PC-9 (cell line): ENCODE measurements at regions of chr2 and their contacts with region 1.

Region 1: DNA sequence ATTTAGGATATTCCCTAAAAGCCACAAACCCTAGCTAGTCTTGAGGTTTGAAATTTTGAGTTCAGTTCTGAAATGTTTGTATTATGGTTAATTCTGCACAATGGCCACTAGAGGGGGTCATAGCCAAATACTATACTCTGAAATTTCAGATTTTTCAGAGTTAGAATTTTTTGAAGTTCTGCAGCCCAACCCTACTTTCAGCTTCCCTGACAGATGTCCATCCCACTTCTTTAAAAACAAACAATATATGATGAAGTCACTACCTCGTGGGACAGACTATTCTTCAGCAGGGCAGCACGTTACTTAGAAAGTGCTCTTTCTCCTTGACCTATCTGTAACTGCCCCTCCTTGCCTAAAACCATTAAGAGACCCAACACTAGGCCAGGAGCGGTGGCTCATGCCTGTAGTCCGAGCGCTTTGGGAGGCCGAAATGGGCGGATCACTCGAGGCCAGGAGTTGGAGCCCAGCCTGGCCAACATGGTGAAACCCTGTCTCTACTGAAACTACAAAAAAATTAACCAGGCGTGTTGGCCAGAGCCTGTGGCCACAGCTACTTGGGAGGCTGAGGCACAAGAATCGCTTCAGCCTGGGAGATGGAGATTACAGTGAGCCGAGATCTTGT is 48.2 kb upstream of the PAPOLG start:
- DNase-seq: peak in 1 of 2 experiments; percentile 53
- H3K4me3 ChIP-seq: no peak overlapping the region
- H3K27ac ChIP-seq: no peak overlapping the region
- H3K4me1 ChIP-seq: no peaks in the 10 kb centered on the region
- H3K27me3 ChIP-seq: no peaks in the 10 kb centered on the region
- CTCF ChIP-seq: peak; percentile 94

Region 2: GRCh38 chr2:60516383-60516811 is 191.5 kb before region 1 on chr2:
- CTCF ChIA-PET with region 1: no interaction called
- POLR2A ChIA-PET with region 1: no interaction called
- intact Hi-C with region 1: no loop called
- DNase-seq: no peak
- H3K4me3 ChIP-seq: no peak overlapping the region
- H3K27ac ChIP-seq: no peak overlapping the region
- H3K4me1 ChIP-seq: no peaks in the 10 kb centered on the region
- H3K27me3 ChIP-seq: peaks cover 60% of the 10 kb centered on the region
- CTCF ChIP-seq: no peak

Region 3: DNA sequence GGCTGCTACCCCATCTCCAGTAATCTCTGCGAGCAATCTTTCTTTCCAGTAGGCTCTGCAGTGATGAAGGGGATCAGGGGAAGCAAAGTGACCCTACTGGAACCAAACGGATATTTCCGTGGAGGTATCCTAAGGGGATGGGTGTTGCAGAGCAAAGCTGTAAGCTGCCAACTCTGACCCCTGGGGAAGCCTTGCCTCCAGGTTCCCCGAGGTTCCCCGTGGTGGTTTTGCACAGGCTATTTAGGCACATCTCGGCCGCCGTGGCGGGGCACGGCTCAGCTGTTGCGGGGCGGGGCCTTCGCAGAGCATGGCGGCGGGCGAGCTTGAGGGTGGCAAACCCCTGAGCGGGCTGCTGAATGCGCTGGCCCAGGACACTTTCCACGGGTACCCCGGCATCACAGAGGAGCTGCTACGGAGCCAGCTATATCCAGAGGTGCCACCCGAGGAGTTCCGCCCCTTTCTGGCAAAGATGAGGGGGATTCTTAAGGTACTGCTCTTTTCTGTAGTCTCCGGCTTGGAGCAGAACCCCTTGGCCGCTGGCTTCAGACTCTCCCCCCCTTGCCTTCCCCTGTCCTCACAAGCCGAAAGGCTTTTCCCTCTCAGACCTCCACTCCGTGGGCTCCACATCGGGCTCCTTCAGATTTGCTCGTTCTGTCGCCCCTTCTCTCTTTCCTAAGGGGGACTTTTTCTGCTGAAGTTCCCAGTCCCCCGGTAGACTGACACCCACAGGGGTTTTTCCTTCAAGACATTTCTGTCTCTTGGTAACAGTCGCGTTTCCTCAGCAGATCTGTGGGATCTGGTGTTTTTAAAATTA is 1197.7 kb after region 1 on chr2 and contains the start of gene COMMD1:
- CTCF ChIA-PET with region 1: no interaction called
- POLR2A ChIA-PET with region 1: no interaction called
- intact Hi-C with region 1: loop called (anchors 10 kb)
- DNase-seq: peak; percentile 68 to 69
- H3K4me3 ChIP-seq: peak within 1 kb of the TSS; percentile 82
- H3K27ac ChIP-seq: no peak within 1 kb of the TSS
- H3K4me1 ChIP-seq: peaks cover 20% of the 10 kb centered on the region
- H3K27me3 ChIP-seq: no peaks in the 10 kb centered on the region
- CTCF ChIP-seq: no peak
- total RNA-seq, gene COMMD1: 16.3 and 20.9 TPM in 2 replicates